ENCODE measurements at regions of chr3 and their contacts with region 1.

Region 1: DNA sequence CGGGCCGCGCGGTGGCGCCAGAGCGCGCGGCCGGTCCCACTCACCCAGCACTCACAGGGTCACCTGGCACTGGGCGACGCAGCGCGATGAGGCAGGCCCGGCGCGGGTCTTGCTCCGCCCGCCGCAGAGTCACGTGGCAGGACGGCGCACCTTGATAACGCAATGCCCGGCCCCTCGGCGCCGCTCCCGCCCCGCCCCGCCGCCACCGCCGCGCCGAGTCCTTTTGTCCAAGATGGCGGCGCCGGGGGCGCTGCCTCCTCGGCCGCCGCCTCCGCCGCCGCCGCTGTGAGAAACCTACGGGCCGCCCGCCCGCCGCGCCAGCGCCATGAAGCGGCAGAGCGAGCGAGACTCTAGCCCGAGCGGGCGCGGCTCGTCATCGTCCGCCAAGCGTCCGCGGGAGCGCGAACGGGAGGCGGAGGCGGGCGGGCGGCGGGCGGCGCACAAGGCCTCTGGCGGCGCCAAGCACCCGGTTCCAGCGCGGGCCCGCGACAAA is at the start of gene RBM15B:
- DNase-seq: peak; percentile 89
- H3K4me3 ChIP-seq: peak within 1 kb of the TSS; percentile 72
- H3K27ac ChIP-seq: peak within 1 kb of the TSS; percentile 43
- H3K27me3 ChIP-seq: no peaks in the 10 kb centered on the region
- CTCF ChIP-seq: no peak; the same call in 1 of the 2 replicates
- polyA plus RNA-seq, gene RBM15B: 12.5 and 17.0 TPM in 2 replicates

Region 2: DNA sequence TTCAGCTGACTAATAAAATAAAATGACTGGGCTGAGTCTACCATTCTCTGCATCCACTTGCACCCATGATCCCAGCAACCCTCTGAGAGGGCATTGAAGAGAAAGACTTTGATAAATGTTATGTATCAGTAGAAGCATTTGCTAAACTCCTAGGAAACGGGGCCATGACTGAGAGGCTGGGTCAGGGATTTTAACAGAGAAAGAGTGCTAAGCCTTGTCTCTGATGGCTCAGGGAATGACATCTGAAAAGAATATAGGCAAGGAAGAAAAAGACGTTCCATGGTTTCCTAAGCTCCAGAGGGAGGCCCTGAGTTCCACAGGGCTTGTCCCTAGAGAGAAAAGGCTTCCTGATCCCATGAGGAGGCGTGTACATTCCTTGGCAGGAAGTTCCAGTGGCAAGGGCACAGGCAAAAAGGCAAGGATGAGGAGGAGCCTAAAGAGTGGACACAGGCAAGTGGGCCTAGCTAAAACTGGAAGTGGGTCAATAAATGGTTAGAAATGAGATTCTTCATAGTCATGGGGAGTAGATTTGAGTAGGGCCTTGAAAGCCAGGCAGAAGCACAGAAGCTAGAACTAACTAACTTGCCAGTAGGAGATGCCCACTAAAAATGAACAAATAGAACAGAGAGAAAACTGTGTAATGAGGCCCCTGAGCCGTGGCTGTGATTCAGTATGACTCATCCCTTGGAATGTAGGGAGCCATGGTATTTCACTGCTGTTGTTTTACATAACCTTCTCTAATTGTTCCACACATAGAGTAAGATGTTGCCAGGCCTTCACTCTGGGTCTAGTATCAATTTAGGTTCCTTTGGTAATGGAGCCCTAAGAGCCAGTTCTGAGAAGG is 50.9 kb before region 1 on chr3:
- CTCF ChIA-PET with region 1: interaction called, 19 read pairs
- POLR2A ChIA-PET with region 1: no interaction called
- DNase-seq: peak; percentile 78
- H3K4me3 ChIP-seq: no peak overlapping the region
- H3K27ac ChIP-seq: peak overlapping the region; percentile 97
- H3K27me3 ChIP-seq: no peaks in the 10 kb centered on the region
- CTCF ChIP-seq: no peak

Region 3: DNA sequence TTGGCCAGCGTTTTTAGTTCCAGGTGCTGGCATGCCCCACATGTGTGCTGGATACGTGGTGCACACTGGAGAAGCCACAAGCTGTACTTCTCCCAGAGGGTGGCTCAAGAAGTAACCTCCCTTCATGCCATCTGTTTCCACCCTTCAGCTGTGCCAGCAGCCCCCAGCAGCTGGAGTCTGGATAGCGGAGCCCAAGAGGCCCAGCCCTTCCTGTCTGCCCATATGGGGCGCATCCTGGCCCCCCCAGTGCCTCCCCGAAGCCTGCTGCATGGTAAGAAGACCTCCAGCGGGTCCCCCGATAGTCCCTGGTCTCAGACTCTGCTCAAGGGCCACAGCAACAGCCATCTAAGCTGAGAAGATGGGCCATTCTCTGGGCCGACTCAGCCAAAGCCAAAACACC is 11.8 kb before region 1 on chr3:
- CTCF ChIA-PET with region 1: interaction called, 11 read pairs
- POLR2A ChIA-PET with region 1: no interaction called
- DNase-seq: no peak
- H3K4me3 ChIP-seq: no peak overlapping the region
- H3K27ac ChIP-seq: no peak overlapping the region
- H3K27me3 ChIP-seq: peaks cover 1% of the 10 kb centered on the region
- CTCF ChIP-seq: no peak

Region 4: DNA sequence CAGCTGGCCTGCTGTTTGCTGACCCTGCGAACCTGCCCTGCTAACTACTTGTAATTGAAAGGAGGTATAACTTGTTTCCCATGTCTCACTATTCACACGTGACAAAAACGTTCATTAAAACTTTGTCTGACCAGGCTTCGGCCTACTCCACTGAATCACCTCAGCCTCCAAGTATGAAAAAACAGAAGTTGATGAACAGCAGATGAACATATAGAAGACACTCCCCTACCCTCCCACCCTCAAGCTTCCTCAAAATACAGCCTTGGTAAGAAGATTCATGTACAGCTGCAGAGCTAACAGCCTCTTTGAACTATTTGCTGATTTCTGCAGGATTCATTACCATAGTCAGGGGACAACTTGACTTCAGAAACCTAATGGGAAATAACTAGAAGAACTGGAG is 10.6 kb after region 1 on chr3:
- CTCF ChIA-PET with region 1: interaction called, 37 read pairs
- POLR2A ChIA-PET with region 1: no interaction called
- DNase-seq: no peak
- H3K4me3 ChIP-seq: no peak overlapping the region
- H3K27ac ChIP-seq: no peak overlapping the region
- H3K27me3 ChIP-seq: no peaks in the 10 kb centered on the region
- CTCF ChIP-seq: no peak

Region 5: GRCh38 chr3:51682079-51682478 is 291.0 kb after region 1 on chr3:
- CTCF ChIA-PET with region 1: interaction called, 55 read pairs
- POLR2A ChIA-PET with region 1: no interaction called
- DNase-seq: peak; percentile 67
- H3K4me3 ChIP-seq: no peak overlapping the region
- H3K27ac ChIP-seq: no peak overlapping the region
- H3K27me3 ChIP-seq: no peaks in the 10 kb centered on the region
- CTCF ChIP-seq: peak; percentile 90

Measured in AG04450 (cell line).